ENCODE measurements at regions of chr6 and their contacts with region 1.

Region 1: DNA sequence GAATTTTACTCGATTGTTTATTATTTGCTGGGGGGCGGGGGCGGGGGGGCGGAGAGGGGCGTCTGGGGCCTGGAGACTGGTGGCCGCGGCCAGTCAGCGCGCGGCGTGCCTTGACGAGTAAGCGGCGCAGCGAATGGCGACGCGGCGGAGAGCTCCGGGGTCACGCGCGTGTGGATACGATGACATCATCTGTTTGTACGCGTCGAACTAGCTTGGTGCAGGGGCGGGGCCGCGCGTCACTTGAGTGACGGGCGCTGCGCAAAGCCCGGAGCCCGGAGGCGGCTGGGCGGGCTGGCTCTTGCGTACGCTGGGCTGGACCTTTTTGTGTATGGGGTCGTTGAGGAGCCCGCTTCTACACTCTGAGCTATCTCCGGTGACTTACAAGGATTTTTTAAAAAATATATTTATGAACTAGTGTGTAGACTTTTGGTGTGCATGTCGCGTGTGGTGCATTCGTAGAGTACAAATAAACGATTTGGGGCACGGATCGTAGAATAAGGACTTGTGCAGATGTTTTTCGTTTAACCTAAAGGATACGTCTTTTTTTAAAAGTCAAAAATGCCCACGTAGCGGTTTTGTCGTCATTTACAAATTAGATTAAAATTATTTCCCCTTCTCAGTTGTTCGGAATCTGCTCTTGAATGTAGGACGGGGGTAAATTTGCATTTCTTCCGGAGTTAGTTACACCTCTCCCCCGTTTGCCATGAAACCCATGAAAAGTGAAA is 2.2 kb upstream of the FOXO3 start:
- DNase-seq: peak; percentile 99
- H3K4me3 ChIP-seq: peak overlapping the region; percentile 97 to 98
- H3K27ac ChIP-seq: peak overlapping the region; percentile 99 to 100
- H3K4me1 ChIP-seq: no peaks in the 10 kb centered on the region
- H3K27me3 ChIP-seq: no peaks in the 10 kb centered on the region
- CTCF ChIP-seq: no peak
- POLR2A ChIP-seq: peak; percentile 69

Region 2: DNA sequence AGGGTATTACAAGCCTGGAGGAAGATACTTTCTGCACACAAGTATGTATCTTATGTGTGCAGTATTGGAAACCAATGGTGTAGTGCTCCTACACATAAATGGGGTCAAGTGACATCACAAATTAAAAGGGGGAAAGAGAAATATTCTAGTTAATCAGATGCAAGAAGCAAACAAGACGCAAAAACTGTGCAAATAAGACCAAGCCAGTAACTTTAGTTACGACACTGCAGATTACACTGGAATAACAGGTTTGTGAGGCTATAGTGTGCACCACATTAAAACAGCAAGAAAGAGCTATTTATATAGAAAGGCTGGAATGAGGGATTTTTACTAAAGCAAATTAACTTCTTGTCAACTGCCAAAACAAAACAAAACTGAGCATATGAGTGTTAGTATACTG is 346.9 kb before region 1 on chr6:
- intact Hi-C with region 1: no loop called
- DNase-seq: no peak
- H3K4me3 ChIP-seq: no peak overlapping the region
- H3K27ac ChIP-seq: no peak overlapping the region
- H3K4me1 ChIP-seq: no peaks in the 10 kb centered on the region
- H3K27me3 ChIP-seq: no peaks in the 10 kb centered on the region
- CTCF ChIP-seq: no peak
- POLR2A ChIP-seq: no peak

Region 3: DNA sequence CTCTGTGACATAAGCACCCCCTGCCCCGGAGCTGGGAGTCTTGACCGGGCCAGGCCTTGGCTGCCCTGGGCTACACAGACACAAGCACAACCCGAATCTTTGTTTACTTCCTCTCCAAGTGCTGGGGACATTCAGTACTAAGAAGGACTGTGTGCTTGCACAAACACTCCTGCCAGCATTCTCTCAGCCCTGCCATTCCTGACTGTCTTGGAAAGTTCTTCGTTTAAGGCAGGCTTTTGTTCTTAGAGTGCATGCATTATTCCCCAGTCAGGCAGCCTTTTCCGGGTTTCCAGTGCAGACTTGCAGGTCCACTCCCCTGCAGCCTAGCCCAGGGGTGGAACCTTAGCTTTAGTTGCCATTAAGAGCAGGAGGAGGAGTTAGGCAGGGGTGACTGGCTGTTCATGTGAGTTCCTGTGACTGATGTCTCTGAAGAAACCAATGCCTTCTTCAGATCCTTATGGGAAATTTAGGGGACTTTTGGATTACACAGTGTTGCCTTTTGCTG is 30.8 kb after region 1 on chr6:
- intact Hi-C with region 1: loop called (anchors 2 kb)
- DNase-seq: peak; percentile 95
- H3K4me3 ChIP-seq: peak overlapping the region in 1 of 2 donors; percentile 12
- H3K27ac ChIP-seq: peak overlapping the region; percentile 85
- H3K4me1 ChIP-seq: peaks cover 60% of the 10 kb centered on the region
- H3K27me3 ChIP-seq: no peaks in the 10 kb centered on the region
- CTCF ChIP-seq: no peak
- POLR2A ChIP-seq: peak; percentile 11

Region 4: DNA sequence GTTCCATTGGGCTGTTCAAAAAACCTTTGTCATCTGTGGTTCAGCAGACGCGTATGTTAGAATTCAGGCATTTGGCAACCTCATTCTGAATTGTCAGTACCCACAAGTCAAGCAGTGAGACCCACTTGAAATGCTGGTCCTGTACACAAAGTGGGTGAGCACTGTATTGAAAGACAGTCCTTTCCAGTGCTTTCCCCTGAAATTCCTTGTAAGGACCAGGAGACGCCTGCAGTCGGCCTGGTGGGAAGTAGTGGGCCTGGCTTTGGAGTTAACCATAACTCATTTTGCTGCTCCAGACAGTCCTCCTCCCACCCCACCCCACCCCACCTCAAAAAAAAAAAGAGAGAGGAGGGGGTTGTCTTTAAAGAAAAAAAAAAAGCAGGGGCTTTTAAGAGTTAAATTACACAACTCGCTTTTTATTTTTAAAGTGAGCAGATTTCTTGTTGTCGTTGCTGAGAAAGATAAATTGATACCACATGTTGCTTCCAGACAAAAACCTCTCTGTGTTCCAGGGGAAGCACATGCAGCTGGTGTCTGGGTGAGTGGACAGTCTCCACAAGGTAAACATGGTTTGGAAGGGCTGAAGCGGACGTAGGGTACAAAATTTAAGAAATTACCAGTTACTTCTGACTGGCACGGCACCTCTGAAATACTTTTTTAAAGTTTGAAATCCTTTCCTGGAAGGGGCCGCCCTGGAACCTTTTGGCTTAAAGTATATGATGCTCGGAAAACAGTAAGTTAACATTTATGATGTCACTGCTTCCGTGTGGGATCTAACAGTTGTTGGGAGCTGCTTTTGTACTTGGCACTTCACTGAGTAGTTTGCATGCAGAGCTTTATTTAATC is 97.5 kb after region 1 on chr6:
- intact Hi-C with region 1: loop called (anchors 2 kb)
- DNase-seq: no peak
- H3K4me3 ChIP-seq: no peak overlapping the region
- H3K27ac ChIP-seq: peak overlapping the region; percentile 73 to 75
- H3K4me1 ChIP-seq: peaks cover 31% of the 10 kb centered on the region
- H3K27me3 ChIP-seq: no peaks in the 10 kb centered on the region
- CTCF ChIP-seq: no peak
- POLR2A ChIP-seq: no peak

Region 5: DNA sequence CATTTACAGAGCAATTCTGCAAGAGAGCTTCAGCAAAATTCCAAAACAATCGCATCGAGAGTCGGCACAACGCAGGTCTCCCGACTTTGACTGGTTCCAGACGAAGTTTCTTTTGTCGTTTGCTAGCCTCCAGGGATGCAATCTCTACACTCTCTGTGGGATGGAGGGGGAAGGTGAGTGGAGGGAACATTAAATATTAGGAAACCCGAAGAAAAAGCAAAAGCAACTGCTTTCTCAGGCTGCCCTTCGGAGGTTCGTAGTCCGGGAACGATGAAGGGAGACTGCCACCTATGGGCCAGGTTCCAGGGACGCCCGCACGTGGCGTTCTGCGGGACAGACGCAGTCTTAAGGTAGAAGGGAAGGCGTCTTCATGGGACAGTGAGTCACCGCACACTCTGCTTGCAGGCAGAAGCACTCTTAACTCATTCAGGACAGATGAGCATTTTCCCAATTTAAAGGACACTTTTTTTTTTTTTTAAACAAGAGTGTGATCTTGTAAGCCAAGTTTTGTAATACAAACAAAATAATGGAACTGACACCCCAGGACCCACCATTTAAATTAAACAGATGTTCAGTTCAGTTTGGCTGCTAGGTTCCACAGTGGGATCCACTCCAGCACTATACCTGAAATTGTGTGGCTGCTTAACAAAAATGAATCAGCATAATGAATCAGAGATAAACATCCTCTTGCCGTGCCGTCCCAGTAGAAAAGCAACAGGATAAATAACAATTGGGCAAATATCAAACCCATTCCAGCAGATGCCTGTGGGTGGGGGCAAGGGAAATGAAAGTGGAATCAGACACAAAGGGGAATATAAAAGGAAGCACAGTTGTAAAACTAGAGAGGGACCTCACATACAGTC is 223.9 kb after region 1 on chr6:
- intact Hi-C with region 1: loop called (anchors 5 kb)
- DNase-seq: peak; percentile 90
- H3K4me3 ChIP-seq: peak overlapping the region; percentile 35 to 39
- H3K27ac ChIP-seq: peak overlapping the region; percentile 63 to 67
- H3K4me1 ChIP-seq: peaks cover 3% of the 10 kb centered on the region
- H3K27me3 ChIP-seq: no peaks in the 10 kb centered on the region
- CTCF ChIP-seq: peak; percentile 55 to 81 (median 80)
- POLR2A ChIP-seq: no peak

Region 6: DNA sequence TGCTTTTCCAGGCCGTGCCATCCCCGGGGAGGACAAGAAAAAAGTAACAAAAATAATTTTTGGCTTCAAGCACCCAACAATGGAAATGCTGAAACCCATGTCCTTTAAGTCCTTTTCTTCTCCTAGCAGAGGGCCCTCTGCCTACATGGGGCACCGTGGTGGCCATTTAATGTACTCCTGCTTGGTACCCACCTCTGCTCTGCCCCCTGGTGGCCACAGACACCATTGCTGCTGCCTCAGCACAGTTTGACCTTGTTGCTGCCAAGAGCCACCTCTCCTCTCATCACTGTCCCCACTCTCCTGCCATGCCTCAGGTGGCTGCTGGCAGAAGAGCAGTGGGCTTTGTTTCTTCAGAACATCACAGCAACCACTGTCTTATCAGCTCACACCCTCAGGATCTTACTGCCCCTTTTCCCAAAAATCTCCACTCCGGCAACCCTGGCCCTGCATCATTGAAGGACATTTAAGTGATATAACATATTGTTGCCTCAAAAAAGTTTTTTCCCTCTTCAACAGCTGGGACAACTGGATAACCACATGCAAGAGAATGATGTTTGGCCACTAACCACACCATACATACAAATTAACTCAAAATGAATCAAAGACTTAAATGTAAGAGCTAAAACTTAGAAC is 276.8 kb after region 1 on chr6:
- intact Hi-C with region 1: loop called (anchors 5 kb)
- DNase-seq: peak; percentile 90
- H3K4me3 ChIP-seq: no peak overlapping the region
- H3K27ac ChIP-seq: no peak overlapping the region
- H3K4me1 ChIP-seq: no peaks in the 10 kb centered on the region
- H3K27me3 ChIP-seq: no peaks in the 10 kb centered on the region
- CTCF ChIP-seq: peak; percentile 83 to 98 (median 96)
- POLR2A ChIP-seq: no peak

Region 7: DNA sequence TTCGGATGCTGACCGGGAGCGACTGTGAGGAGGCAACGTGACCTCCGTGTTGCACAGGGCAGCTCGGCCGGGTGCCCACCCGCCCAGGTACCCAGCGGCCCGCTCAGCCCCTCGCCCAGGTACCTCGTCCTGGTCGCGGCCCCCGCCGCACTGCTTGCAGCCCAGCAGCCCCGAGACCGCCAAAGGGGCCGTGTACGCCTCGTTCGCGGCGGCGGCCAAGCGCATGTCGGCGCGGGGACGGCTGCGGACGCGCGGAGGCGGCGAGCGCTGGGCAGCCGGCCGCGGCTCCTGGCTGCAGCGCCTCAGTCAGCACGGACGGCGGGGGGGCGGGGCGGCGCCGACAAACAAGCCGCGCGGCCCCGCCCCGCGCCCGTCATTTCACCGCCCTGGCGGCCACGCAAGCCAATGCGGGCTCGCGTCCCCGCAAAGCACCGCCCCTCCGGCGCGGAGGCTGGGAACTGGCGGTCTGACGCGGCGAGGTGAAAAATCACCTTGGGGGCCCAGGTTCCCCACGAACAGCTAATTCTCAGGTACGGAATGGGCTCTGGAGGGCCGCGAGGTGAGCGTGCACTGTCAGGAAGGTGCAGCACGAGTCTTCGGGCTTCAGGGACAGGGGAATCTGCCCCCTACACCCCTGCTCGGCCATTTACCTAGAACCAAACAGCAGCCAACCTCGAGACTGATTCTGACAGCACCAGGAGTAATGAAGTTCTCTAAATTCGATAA is 450.9 kb after region 1 on chr6:
- intact Hi-C with region 1: loop called (anchors 5 kb)
- DNase-seq: peak; percentile 94
- H3K4me3 ChIP-seq: peak overlapping the region; percentile 97 to 98
- H3K27ac ChIP-seq: peak overlapping the region; percentile 94 to 96
- H3K4me1 ChIP-seq: no peaks in the 10 kb centered on the region
- H3K27me3 ChIP-seq: no peaks in the 10 kb centered on the region
- CTCF ChIP-seq: peak; percentile 15 to 92 (median 48)
- POLR2A ChIP-seq: peak; percentile 90